HepG2 (cell line): ENCODE measurements at regions of chr7 and their contacts with region 1.

Region 1: DNA sequence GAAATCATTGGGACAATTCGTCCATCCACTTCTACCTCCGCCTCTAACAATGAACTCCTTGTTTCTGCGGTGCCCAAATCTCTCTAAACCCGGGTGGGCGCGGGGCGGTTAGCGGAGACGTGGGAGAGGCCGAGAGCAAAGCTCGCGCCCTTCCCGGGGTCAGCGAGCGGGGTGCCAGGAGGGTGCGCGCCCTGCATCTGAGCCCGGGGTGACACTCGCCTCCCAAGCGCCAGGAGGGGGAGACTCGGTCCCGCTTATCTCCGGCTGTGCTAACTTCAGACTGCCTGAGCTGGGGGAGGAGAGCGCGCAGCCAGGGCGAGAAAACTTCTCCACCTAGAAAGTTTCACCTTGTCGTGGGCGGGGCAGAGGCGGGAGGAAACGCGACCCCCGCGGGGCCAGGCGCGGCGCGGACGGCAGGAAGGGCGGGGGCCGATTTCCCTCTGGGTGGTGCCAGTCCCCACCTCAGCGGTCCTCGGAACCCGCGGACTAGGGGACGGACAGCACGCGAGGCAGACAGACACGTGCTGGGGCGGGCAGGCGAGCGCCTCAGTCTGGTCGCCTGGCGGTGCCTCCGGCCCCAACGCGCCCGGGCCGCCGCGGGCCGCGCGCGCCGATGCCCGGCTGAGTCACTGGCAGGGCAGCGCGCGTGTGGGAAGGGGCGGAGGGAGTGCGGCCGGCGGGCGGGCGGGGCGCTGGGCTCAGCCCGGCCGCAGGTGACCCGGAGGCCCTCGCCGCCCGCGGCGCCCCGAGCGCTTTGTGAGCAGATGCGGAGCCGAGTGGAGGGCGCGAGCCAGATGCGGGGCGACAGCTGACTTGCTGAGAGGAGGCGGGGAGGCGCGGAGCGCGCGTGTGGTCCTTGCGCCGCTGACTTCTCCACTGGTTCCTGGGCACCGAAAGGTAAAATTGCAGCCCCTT is at the start of gene MET:
- DNase-seq: peak; percentile 80
- ATAC-seq: peak; percentile 96
- H3K4me3 ChIP-seq: peak within 1 kb of the TSS; percentile 74 to 97 (median 77)
- H3K27ac ChIP-seq: peak within 1 kb of the TSS; percentile 72
- H3K4me1 ChIP-seq: peaks cover 37% of the 10 kb centered on the region
- H3K27me3 ChIP-seq: no peaks in the 10 kb centered on the region; a peak in 1 of 5 replicates
- CTCF ChIP-seq: peak; percentile 97
- EP300 ChIP-seq: peak in 1 of 2 experiments; percentile 40; a peak in 1 of 4 replicates
- POLR2A ChIP-seq: peak in 1 of 2 experiments; percentile 65; a peak in 1 of 4 replicates
- RAD21 ChIP-seq: peak; percentile 93
- total RNA-seq, gene MET: 23.3 and 31.5 TPM in 2 replicates

Region 2: GRCh38 chr7:116258734-116259133 is 413.2 kb before region 1 on chr7:
- CTCF ChIA-PET with region 1: no interaction called
- POLR2A ChIA-PET with region 1: no interaction called
- in situ Hi-C with region 1: no loop called
- intact Hi-C with region 1: loop called (anchors 5 kb)
- DNase-seq: peak; percentile 22
- ATAC-seq: no peak
- H3K4me3 ChIP-seq: no peak overlapping the region
- H3K27ac ChIP-seq: no peak overlapping the region
- H3K4me1 ChIP-seq: no peaks in the 10 kb centered on the region
- H3K27me3 ChIP-seq: no peaks in the 10 kb centered on the region
- CTCF ChIP-seq: peak; percentile 66
- EP300 ChIP-seq: no peak
- POLR2A ChIP-seq: no peak
- RAD21 ChIP-seq: peak; percentile 57; the same call in 1 of the 2 replicates

Region 3: DNA sequence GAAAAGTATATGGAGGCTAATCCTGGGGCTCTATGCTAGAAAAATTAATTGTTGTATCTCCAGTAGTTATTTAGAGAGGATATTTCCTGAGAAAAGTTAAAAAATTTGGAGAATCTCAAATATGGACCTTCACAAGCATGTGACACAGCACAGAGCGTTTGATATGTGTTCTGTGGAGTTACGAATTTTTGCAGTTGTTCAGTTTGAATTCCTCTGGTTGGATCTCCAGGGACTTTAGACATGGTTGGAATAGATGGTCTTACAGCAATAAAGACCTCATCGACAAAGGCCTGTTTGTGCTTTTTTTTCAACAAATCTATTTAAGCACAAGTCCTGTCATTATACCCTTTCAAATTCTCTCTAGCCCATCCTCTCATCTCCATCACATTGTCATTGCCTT is 323.6 kb before region 1 on chr7:
- CTCF ChIA-PET with region 1: no interaction called
- POLR2A ChIA-PET with region 1: no interaction called
- in situ Hi-C with region 1: no loop called
- intact Hi-C with region 1: no loop called
- DNase-seq: no peak
- ATAC-seq: no peak
- H3K4me3 ChIP-seq: no peak overlapping the region
- H3K27ac ChIP-seq: no peak overlapping the region
- H3K4me1 ChIP-seq: no peaks in the 10 kb centered on the region
- H3K27me3 ChIP-seq: no peaks in the 10 kb centered on the region; a peak in 2 of 5 replicates
- CTCF ChIP-seq: no peak
- EP300 ChIP-seq: no peak
- POLR2A ChIP-seq: no peak
- RAD21 ChIP-seq: no peak

Region 4: GRCh38 chr7:116786791-116787443 is 115.0 kb after region 1 on chr7:
- CTCF ChIA-PET with region 1: interaction called, 9 read pairs
- POLR2A ChIA-PET with region 1: interaction called, 3 read pairs
- in situ Hi-C with region 1: no loop called
- intact Hi-C with region 1: loop called (anchors 1 kb)
- DNase-seq: peak; percentile 47
- ATAC-seq: peak; percentile 83
- H3K4me3 ChIP-seq: no peak overlapping the region
- H3K27ac ChIP-seq: no peak overlapping the region
- H3K4me1 ChIP-seq: peaks cover 35% of the 10 kb centered on the region
- H3K27me3 ChIP-seq: no peaks in the 10 kb centered on the region
- CTCF ChIP-seq: peak; percentile 65
- EP300 ChIP-seq: no peak
- POLR2A ChIP-seq: no peak
- RAD21 ChIP-seq: no peak

Region 5: DNA sequence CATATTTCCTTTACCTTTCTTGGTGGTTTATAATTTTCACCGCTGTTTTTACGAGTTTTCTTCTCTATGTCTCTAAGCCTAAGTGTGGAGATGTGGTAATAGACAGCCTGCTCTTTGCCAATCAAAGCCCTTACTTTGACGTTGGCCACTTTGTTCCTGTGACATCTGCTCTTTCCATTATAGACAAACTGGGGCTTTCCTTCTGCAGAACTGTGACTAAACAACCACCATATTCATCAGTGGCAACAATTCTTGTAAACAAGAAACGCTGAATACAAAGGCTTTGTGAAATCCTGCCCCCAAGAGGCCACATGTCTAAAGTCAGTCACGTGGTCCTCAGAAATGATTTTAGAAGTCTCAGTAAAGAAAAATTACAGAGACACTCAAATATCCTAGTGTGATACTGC is 130.8 kb after region 1 on chr7:
- CTCF ChIA-PET with region 1: no interaction called
- POLR2A ChIA-PET with region 1: interaction called, 21 read pairs
- in situ Hi-C with region 1: loop called (anchors 5 kb)
- intact Hi-C with region 1: loop called (anchors 1 kb)
- DNase-seq: peak; percentile 56
- ATAC-seq: peak; percentile 12; the same call in 2 of the 3 replicates
- H3K4me3 ChIP-seq: no peak overlapping the region
- H3K27ac ChIP-seq: peak overlapping the region; percentile 14
- H3K4me1 ChIP-seq: peaks cover 77% of the 10 kb centered on the region
- H3K27me3 ChIP-seq: no peaks in the 10 kb centered on the region
- CTCF ChIP-seq: peak; percentile 64
- EP300 ChIP-seq: peak in 1 of 2 experiments; percentile 36; a peak in 1 of 4 replicates
- POLR2A ChIP-seq: no peak
- RAD21 ChIP-seq: no peak